Ovary (tissue), 10 donors: ENCODE measurements at regions of chr7 and their contacts with region 1.

Region 1: DNA sequence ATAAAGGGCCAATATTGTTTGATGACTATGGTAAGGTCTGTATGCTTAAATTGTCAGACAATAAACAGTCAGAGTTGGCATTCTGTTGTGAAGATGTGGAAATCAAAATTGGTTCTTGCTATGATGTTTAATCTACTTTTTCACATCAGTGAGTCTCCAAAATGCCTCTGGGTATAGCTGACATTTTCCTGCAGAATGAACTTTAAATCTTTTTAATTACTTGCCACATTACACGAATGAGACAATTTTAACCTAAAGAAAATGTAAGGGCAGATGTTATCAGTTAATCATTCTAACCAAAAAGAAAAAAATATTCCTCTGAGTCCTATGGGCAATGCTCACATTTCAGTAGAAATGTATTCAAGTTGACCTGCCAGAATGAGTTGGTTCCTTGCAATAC is 241.3 kb upstream of the TEX47 start:
- DNase-seq: no peak
- H3K4me3 ChIP-seq: no peak overlapping the region
- H3K27ac ChIP-seq: no peak overlapping the region
- H3K4me1 ChIP-seq: no peaks in the 10 kb centered on the region
- H3K27me3 ChIP-seq: no peaks in the 10 kb centered on the region
- CTCF ChIP-seq: no peak
- EP300 ChIP-seq: no peak
- POLR2A ChIP-seq: no peak

Region 2: DNA sequence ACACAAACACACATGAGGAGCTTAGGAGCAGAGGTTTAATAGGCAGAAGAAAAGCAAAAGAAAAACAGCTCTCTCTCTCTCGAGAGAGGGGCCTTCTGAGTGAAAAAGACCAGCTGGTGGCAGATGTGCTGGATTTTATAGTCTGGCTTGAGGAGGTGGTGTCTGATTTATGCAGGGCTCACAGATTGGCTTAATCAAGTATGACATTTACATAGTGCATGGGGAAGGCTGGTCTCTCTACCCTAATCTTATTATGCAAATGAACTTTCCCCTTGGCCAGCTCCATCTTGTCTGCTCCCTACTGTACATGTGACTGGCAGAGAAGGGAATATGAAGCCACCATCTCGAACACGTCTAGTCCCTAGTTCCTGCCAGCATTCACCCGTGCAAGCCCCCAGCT is 496.8 kb before region 1 on chr7:
- intact Hi-C with region 1: no loop called
- DNase-seq: no peak
- H3K4me3 ChIP-seq: no peak overlapping the region
- H3K27ac ChIP-seq: no peak overlapping the region
- H3K4me1 ChIP-seq: no peaks in the 10 kb centered on the region
- H3K27me3 ChIP-seq: no peaks in the 10 kb centered on the region
- CTCF ChIP-seq: no peak
- EP300 ChIP-seq: no peak
- POLR2A ChIP-seq: no peak

Region 3: GRCh38 chr7:89655946-89656345 is 619.1 kb after region 1 on chr7:
- intact Hi-C with region 1: loop called in 1 of 4 experiments (anchors 5 kb)
- DNase-seq: no peak
- H3K4me3 ChIP-seq: no peak overlapping the region
- H3K27ac ChIP-seq: no peak overlapping the region
- H3K4me1 ChIP-seq: no peaks in the 10 kb centered on the region
- H3K27me3 ChIP-seq: no peaks in the 10 kb centered on the region
- CTCF ChIP-seq: no peak
- EP300 ChIP-seq: no peak
- POLR2A ChIP-seq: no peak